CD8-positive, alpha-beta T cell (primary cell): ENCODE measurements at regions of chr5 and their contacts with region 1.

Region 1: DNA sequence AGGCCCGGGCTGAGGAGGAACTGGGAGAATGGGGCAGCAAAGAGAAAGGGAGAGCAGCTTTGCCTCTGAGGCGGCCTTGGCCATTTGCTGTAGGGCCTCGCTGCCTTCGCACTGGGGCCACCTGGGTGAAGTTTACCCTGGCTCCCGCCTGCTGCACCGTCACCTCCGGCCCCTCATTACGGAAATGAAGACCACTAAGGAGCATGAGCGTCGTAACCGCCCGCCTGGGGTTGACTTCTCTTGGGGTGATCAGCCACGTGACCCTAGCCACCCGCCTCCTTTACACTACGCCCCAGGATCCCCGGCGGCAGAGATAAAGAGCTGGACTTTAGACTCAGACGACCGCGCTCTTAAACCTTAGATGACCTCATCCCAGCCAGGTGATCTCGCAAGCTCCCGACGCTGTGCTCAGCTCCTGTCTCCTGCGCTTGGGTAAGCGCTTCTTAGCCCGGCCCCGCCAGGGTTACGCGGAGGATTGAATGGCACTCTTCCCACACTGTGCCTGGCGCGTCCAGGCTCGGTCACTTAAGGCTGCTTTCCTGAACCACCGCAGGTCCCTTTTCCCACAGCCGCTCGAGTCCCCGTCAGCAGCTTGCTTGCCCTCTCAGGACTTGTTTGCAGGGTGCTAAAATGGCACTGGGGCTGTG is 107.9 kb upstream of the LARP1 start:
- DNase-seq: peak in 8 of 9 experiments; percentile 9 to 70 (median 39)
- ATAC-seq: peak; percentile 68
- H3K4me3 ChIP-seq: peak overlapping the region; percentile 53 to 75
- H3K4me3 Mint-ChIP-seq: peak overlapping the region; percentile 89
- H3K27ac ChIP-seq: peak overlapping the region in 1 of 2 experiments; percentile 1
- H3K27ac Mint-ChIP-seq: peak overlapping the region; percentile 66
- H3K4me1 ChIP-seq: peaks cover 6% of the 10 kb centered on the region
- H3K4me1 Mint-ChIP-seq: peaks cover 15% of the 10 kb centered on the region
- H3K27me3 ChIP-seq: no peaks in the 10 kb centered on the region
- H3K27me3 Mint-ChIP-seq: no peaks in the 10 kb centered on the region
- CTCF ChIP-seq: no peak

Region 2: GRCh38 chr5:154356020-154356655 is 291.1 kb before region 1 on chr5:
- CTCF ChIA-PET with region 1: no interaction called
- POLR2A ChIA-PET with region 1: no interaction called
- intact Hi-C with region 1: no loop called
- DNase-seq: no peak
- ATAC-seq: no peak
- H3K4me3 ChIP-seq: no peak overlapping the region
- H3K4me3 Mint-ChIP-seq: no peak overlapping the region
- H3K27ac ChIP-seq: no peak overlapping the region
- H3K27ac Mint-ChIP-seq: no peak overlapping the region
- H3K4me1 ChIP-seq: no peaks in the 10 kb centered on the region
- H3K4me1 Mint-ChIP-seq: peaks cover 6% of the 10 kb centered on the region
- H3K27me3 ChIP-seq: no peaks in the 10 kb centered on the region
- H3K27me3 Mint-ChIP-seq: no peaks in the 10 kb centered on the region
- CTCF ChIP-seq: no peak

Region 3: GRCh38 chr5:154478224-154478565 is 169.0 kb before region 1 on chr5 and contains the start of gene HAND1:
- CTCF ChIA-PET with region 1: no interaction called
- POLR2A ChIA-PET with region 1: no interaction called
- intact Hi-C with region 1: loop called in 1 of 2 experiments (anchors 10 kb)
- DNase-seq: no peak
- ATAC-seq: no peak
- H3K4me3 ChIP-seq: no peak within 1 kb of the TSS
- H3K4me3 Mint-ChIP-seq: peak within 1 kb of the TSS; percentile 65
- H3K27ac ChIP-seq: no peak within 1 kb of the TSS
- H3K27ac Mint-ChIP-seq: no peak within 1 kb of the TSS
- H3K4me1 ChIP-seq: peaks cover 61% of the 10 kb centered on the region
- H3K4me1 Mint-ChIP-seq: peaks cover 62% of the 10 kb centered on the region
- H3K27me3 ChIP-seq: peaks cover 49 to 83% of the 10 kb centered on the region in 2 experiments
- H3K27me3 Mint-ChIP-seq: peaks cover 83% of the 10 kb centered on the region
- CTCF ChIP-seq: no peak
- total RNA-seq, gene HAND1: not detected

Region 4: DNA sequence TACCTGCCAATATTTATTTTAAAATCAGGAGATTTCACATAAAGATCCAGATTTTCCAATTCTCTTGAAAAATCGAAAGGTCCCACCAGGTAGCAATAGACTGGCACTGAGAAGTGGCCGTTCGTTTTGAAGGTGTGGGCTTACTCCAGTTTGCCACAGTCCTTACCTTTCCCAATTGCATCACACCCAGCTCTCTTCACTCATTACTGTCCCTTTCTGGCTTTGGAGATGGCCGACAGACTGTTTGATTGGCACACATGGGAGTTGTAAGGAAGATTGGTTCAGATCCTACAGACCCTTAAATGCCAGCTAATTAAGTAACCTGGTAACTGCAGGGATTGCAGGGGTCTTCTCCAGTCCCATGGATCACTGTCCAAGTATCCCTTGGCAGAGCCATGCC is 39.3 kb after region 1 on chr5:
- CTCF ChIA-PET with region 1: no interaction called
- POLR2A ChIA-PET with region 1: no interaction called
- intact Hi-C with region 1: no loop called
- DNase-seq: no peak
- ATAC-seq: no peak
- H3K4me3 ChIP-seq: no peak overlapping the region
- H3K4me3 Mint-ChIP-seq: no peak overlapping the region
- H3K27ac ChIP-seq: no peak overlapping the region
- H3K27ac Mint-ChIP-seq: no peak overlapping the region
- H3K4me1 ChIP-seq: no peaks in the 10 kb centered on the region
- H3K4me1 Mint-ChIP-seq: peaks cover 6% of the 10 kb centered on the region
- H3K27me3 ChIP-seq: no peaks in the 10 kb centered on the region
- H3K27me3 Mint-ChIP-seq: peaks cover 9% of the 10 kb centered on the region
- CTCF ChIP-seq: no peak

Region 5: DNA sequence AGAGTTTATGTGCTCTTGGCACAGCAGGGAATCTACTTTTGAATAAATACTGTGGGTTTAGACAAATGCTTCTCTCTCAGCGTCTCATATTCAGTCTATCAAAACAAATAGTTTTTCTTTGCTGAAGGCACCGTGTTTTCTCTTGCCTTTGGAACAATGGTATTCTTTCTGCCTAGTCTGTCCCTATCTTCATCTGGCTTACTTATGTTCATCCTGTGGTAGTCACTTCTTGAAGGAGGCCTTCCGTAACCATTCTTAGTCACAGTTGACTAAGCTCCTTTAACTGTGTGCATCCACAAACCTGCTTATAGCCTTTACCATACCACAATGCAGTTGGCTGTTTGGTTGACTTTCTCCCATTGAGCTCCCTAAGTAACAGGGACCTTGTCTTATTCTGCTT is 153.8 kb after region 1 on chr5:
- CTCF ChIA-PET with region 1: interaction called, 13 read pairs
- POLR2A ChIA-PET with region 1: no interaction called
- intact Hi-C with region 1: no loop called
- DNase-seq: no peak
- ATAC-seq: no peak
- H3K4me3 ChIP-seq: no peak overlapping the region
- H3K4me3 Mint-ChIP-seq: no peak overlapping the region
- H3K27ac ChIP-seq: no peak overlapping the region
- H3K27ac Mint-ChIP-seq: no peak overlapping the region
- H3K4me1 ChIP-seq: no peaks in the 10 kb centered on the region
- H3K4me1 Mint-ChIP-seq: peaks cover 7% of the 10 kb centered on the region
- H3K27me3 ChIP-seq: no peaks in the 10 kb centered on the region
- H3K27me3 Mint-ChIP-seq: no peaks in the 10 kb centered on the region
- CTCF ChIP-seq: no peak

Region 6: GRCh38 chr5:154811653-154812365 is 164.6 kb after region 1 on chr5:
- CTCF ChIA-PET with region 1: interaction called, 24 read pairs
- POLR2A ChIA-PET with region 1: no interaction called
- intact Hi-C with region 1: loop called (anchors 1 kb)
- DNase-seq: peak; percentile 40 to 77 (median 69)
- ATAC-seq: peak; percentile 69
- H3K4me3 ChIP-seq: no peak overlapping the region
- H3K4me3 Mint-ChIP-seq: no peak overlapping the region
- H3K27ac ChIP-seq: no peak overlapping the region
- H3K27ac Mint-ChIP-seq: peak overlapping the region; percentile 66
- H3K4me1 ChIP-seq: peaks cover 26% of the 10 kb centered on the region
- H3K4me1 Mint-ChIP-seq: peaks cover 33% of the 10 kb centered on the region
- H3K27me3 ChIP-seq: no peaks in the 10 kb centered on the region
- H3K27me3 Mint-ChIP-seq: no peaks in the 10 kb centered on the region
- CTCF ChIP-seq: peak; percentile 95

Region 7: DNA sequence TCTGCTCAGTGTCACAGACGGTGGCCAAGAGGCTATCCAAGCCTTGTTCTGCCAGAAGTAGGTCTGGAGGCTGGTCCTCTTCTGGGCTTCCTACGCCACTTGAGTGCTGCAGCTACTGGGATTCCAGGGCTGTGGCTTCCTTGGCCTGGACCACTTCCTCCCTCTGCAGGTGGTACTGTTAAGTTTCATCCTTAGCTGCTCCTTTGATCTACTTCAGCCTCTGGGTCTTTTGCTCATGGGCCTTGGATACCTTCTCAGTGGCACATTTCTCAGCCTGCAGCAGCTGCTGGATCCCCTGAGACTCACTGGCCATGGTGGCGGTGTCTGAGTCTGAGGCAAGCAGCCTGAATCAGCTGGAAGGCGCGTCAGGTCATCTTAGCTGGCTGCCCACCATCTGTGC is 221.5 kb after region 1 on chr5:
- CTCF ChIA-PET with region 1: interaction called, 4 read pairs
- POLR2A ChIA-PET with region 1: no interaction called
- intact Hi-C with region 1: loop called in 1 of 2 experiments (anchors 1 kb)
- DNase-seq: peak in 2 of 9 experiments; percentile 31 to 50
- ATAC-seq: peak; percentile 51
- H3K4me3 ChIP-seq: no peak overlapping the region
- H3K4me3 Mint-ChIP-seq: no peak overlapping the region
- H3K27ac ChIP-seq: no peak overlapping the region
- H3K27ac Mint-ChIP-seq: no peak overlapping the region
- H3K4me1 ChIP-seq: no peaks in the 10 kb centered on the region
- H3K4me1 Mint-ChIP-seq: peaks cover 21% of the 10 kb centered on the region
- H3K27me3 ChIP-seq: no peaks in the 10 kb centered on the region
- H3K27me3 Mint-ChIP-seq: no peaks in the 10 kb centered on the region
- CTCF ChIP-seq: no peak